Gastrocnemius medialis (tissue), 4 donors: ENCODE measurements at regions of chr17 and their contacts with region 1.

Region 1: DNA sequence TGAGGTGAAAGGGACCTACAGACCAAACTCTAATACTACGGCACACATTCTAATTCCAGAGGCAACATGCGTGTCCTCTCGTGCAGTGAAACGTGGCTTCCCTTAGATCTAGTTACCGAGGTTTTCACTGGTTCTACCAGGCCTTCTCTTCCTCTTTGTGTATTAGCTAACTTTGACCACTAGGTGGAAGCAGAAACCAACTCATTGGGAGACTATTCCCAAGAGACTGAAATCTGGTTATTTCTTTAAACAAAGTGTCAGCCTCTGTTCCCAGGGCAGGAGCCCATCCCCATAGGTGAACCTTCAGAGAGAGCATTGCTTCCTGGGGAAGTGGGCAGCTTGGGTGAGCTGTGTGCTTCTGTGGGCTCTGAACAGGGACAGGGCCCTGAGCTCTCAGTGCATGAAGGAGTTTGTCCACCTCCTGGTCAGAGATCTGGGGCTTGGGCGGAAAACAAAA is 19.7 kb upstream of the RCVRN start:
- DNase-seq: no peak
- ATAC-seq: peak; percentile 76 to 89
- H3K4me3 ChIP-seq: no peak overlapping the region
- H3K27ac ChIP-seq: no peak overlapping the region
- H3K4me1 ChIP-seq: no peaks in the 10 kb centered on the region
- H3K27me3 ChIP-seq: no peaks in the 10 kb centered on the region
- CTCF ChIP-seq: peak; percentile 61 to 78 (median 76)
- POLR2A ChIP-seq: no peak

Region 2: DNA sequence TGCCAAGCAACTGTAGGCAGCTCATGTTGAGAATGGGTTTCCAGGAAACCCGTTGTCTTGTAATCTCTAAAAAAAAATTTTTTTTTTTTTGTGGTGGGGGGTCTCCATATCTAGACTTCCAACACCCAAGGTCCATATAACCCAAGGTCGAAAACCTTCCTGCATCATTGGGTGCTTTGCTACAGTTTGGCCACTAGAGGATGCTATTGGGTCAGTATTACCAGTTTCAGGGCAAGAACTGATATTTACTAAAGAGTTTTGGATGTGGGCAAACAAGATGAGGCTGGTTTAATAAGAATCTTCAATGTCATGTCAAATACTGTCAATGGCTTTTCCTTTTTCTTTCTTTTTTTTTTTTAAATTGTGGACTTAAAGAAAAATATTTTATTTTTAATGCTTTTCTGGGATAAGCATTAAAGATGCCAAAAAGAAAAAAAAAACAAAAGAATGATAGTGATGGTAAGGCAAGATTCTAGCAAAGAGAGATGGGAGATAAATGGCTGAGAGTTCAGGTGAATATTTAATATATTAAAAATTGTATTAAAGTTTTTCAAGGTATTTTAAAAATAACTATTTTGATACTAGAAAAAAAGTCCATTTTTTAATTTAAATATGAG is 195.6 kb before region 1 on chr17:
- in situ Hi-C with region 1: loop called in 2 of 4 experiments (anchors 25 kb)
- intact Hi-C with region 1: no loop called
- DNase-seq: no peak
- ATAC-seq: peak; percentile 56 to 71
- H3K4me3 ChIP-seq: no peak overlapping the region
- H3K27ac ChIP-seq: no peak overlapping the region
- H3K4me1 ChIP-seq: no peaks in the 10 kb centered on the region
- H3K27me3 ChIP-seq: no peaks in the 10 kb centered on the region
- CTCF ChIP-seq: peak; percentile 82 to 97 (median 90)
- POLR2A ChIP-seq: no peak

Region 3: GRCh38 chr17:9817086-9817485 is 107.7 kb before region 1 on chr17:
- in situ Hi-C with region 1: loop called in 1 of 4 experiments (anchors 25 kb)
- intact Hi-C with region 1: no loop called
- DNase-seq: no peak
- ATAC-seq: peak in 1 of 2 donors; percentile 53
- H3K4me3 ChIP-seq: no peak overlapping the region
- H3K27ac ChIP-seq: no peak overlapping the region
- H3K4me1 ChIP-seq: no peaks in the 10 kb centered on the region
- H3K27me3 ChIP-seq: no peaks in the 10 kb centered on the region
- CTCF ChIP-seq: no peak
- POLR2A ChIP-seq: no peak

Region 4: GRCh38 chr17:9959377-9959981 is 34.7 kb after region 1 on chr17:
- in situ Hi-C with region 1: no loop called
- intact Hi-C with region 1: loop called (anchors 2 kb)
- DNase-seq: no peak
- ATAC-seq: peak in 1 of 2 donors; percentile 39
- H3K4me3 ChIP-seq: no peak overlapping the region
- H3K27ac ChIP-seq: no peak overlapping the region
- H3K4me1 ChIP-seq: no peaks in the 10 kb centered on the region
- H3K27me3 ChIP-seq: peaks cover 0 to 4% (median 0%) of the 10 kb centered on the region in 3 donors
- CTCF ChIP-seq: peak in 3 of 5 experiments; percentile 24 to 35 (median 35)
- POLR2A ChIP-seq: no peak

Region 5: DNA sequence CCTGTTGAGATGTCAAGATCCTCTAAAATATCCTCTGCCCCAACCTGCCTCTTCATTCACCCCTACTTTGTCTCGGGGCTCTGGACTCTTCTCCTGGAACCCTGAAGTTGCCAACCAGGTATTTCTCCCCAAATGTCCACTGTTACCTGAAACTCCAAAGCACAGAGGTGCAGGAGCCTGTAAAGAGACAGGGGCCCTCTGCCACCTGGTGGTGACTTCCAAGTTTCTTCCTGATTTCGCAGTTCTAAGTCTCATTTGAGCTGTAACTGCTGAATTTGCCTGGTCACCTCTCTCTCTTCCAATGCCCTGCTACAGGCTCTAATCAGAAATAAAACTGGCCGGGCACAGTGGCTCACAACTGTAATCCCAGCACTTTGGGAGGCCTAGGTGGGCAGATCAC is 57.4 kb after region 1 on chr17:
- in situ Hi-C with region 1: no loop called
- intact Hi-C with region 1: loop called (anchors 2 kb)
- DNase-seq: no peak
- ATAC-seq: no peak
- H3K4me3 ChIP-seq: no peak overlapping the region
- H3K27ac ChIP-seq: no peak overlapping the region
- H3K4me1 ChIP-seq: no peaks in the 10 kb centered on the region
- H3K27me3 ChIP-seq: no peaks in the 10 kb centered on the region
- CTCF ChIP-seq: no peak
- POLR2A ChIP-seq: no peak

Region 6: GRCh38 chr17:10087081-10087754 is 162.5 kb after region 1 on chr17:
- in situ Hi-C with region 1: no loop called
- intact Hi-C with region 1: no loop called
- DNase-seq: no peak
- ATAC-seq: peak in 1 of 2 donors; percentile 36
- H3K4me3 ChIP-seq: no peak overlapping the region
- H3K27ac ChIP-seq: no peak overlapping the region
- H3K4me1 ChIP-seq: no peaks in the 10 kb centered on the region
- H3K27me3 ChIP-seq: no peaks in the 10 kb centered on the region
- CTCF ChIP-seq: no peak
- POLR2A ChIP-seq: no peak

Region 7: GRCh38 chr17:10226930-10227685 is 302.3 kb after region 1 on chr17:
- in situ Hi-C with region 1: loop called in 1 of 4 experiments (anchors 10 kb)
- intact Hi-C with region 1: loop called (anchors 5 kb)
- DNase-seq: peak in 1 of 2 donors; percentile 16
- ATAC-seq: no peak
- H3K4me3 ChIP-seq: no peak overlapping the region
- H3K27ac ChIP-seq: no peak overlapping the region
- H3K4me1 ChIP-seq: no peaks in the 10 kb centered on the region
- H3K27me3 ChIP-seq: no peaks in the 10 kb centered on the region
- CTCF ChIP-seq: peak in 4 of 5 experiments; percentile 38 to 51 (median 49)
- POLR2A ChIP-seq: no peak

Region 8: DNA sequence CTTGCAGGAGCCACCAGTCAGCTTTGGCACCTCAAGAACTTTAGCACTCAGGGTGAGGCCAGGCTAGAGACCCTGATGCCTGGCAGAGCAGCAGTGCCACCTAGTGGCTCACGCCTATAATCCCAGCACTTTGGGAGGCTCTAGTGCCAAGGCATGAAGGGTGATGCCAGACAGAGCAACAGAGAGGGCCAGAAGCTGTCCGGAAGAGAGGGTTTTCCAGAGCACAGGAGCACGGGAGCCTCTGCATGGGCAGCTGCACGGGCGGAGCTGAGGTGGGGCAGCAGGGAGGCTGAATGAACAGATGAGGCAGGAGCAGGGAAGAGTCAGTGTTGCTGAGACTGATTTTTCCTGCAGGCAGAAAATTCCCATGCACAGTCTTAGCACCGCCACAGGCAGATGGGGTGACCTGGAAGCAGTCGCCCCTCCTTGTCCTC is 693.5 kb after region 1 on chr17:
- in situ Hi-C with region 1: loop called in 3 of 4 experiments (anchors 25 kb)
- intact Hi-C with region 1: loop called (anchors 5 kb)
- DNase-seq: peak; percentile 38 to 78
- ATAC-seq: peak; percentile 53 to 64
- H3K4me3 ChIP-seq: no peak overlapping the region
- H3K27ac ChIP-seq: peak overlapping the region in 3 of 4 donors; percentile 23 to 84 (median 35)
- H3K4me1 ChIP-seq: peaks cover 11 to 32% of the 10 kb centered on the region in 2 donors
- H3K27me3 ChIP-seq: no peaks in the 10 kb centered on the region
- CTCF ChIP-seq: peak; percentile 63 to 85 (median 82)
- POLR2A ChIP-seq: no peak